Activated CD4-positive, alpha-beta memory T cell treated with anti-CD3 and anti-CD28 coated beads for 36 hours (primary cell): ENCODE measurements at regions of chr16 and their contacts with region 1.

Region 1: DNA sequence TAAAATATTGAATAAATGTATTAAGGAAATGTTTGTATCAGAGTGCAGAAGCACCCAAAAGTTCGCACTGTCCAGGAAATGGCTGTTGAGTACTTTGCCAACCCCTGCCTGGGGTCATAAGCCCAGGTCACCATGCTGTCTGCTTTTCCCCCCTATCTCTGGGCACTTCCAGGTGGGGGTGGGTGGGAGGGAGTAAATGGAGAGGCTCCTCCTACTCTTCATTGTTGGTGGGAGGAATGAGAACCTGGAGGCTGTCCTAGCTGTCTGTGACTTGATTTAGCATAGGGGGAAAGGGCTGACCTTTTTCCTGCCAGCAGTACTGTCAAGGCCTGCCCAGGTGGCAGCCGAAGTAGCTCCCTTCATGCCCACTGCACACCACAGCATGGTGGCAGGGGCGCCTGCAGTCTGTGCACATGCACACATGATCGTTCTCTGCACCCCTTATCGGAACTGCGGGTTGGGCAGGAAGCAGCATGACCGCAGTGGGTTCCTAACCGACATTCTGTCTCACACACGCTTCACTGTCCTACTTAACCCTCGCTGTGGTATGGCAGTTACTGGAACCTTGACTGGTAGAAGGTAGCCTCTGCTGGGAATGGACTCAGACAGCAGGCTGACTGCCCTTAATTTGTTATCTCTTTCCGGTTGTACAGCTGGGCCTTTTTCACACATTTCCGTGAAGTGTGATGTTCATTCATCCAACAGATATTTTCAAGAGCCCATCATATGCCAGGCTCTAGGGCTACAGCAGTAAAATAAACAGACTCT is 41.5 kb downstream of the LDHD start:
- DNase-seq: peak; percentile 93
- H3K4me3 Mint-ChIP-seq: peak overlapping the region; percentile 52
- H3K27ac Mint-ChIP-seq: peak overlapping the region; percentile 91
- H3K4me1 Mint-ChIP-seq: peaks cover 42% of the 10 kb centered on the region
- H3K27me3 Mint-ChIP-seq: no peaks in the 10 kb centered on the region

Region 2: GRCh38 chr16:74606521-74607310 is 468.4 kb before region 1 on chr16 and contains the start of gene GLG1:
- CTCF ChIA-PET with region 1: no interaction called
- POLR2A ChIA-PET with region 1: no interaction called
- intact Hi-C with region 1: no loop called
- DNase-seq: peak; percentile 93
- H3K4me3 Mint-ChIP-seq: peak within 1 kb of the TSS; percentile 83
- H3K27ac Mint-ChIP-seq: peak within 1 kb of the TSS; percentile 85
- H3K4me1 Mint-ChIP-seq: peaks cover 54% of the 10 kb centered on the region
- H3K27me3 Mint-ChIP-seq: no peaks in the 10 kb centered on the region
- total RNA-seq, gene GLG1: 58.1 to 63.8 TPM

Region 3: DNA sequence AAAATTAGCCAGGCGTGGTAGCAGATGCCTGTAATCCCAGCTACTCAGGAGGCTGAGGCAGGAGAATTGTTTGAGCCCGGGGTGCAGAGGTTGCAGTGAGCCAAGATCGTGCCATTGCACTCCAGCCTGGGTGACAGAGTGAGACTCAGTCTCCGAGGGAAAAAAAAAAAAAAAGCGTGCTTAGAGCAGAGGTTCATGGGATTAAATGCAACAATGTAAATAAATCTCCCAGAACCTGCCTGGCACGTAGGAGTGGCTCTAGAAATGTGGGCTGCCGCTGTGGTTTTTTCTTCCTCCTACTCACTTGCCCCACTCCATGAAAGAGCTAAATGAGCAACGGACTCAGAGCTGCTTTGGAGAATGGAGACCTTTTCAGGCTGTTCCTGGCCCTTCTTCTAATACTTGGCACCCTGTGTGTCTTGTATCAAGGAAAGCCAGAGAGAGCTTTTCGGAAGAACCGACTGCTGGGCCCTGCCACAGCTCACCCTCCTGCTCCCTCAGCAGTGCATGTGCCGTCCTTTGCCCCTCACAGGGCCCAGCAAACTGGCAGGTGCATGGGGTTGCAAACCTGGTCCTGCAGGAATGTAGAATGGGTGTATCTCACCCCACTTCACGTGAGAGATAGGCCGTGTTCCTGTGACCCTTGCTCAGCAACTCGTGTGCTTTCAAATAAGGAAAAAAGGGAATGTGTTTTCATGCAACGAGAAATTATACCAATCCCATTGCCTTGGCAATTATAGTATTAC is 10.5 kb before region 1 on chr16:
- CTCF ChIA-PET with region 1: interaction called, 4 read pairs
- POLR2A ChIA-PET with region 1: interaction called, 3 read pairs
- intact Hi-C with region 1: loop called (anchors 1 kb)
- DNase-seq: peak; percentile 62
- H3K4me3 Mint-ChIP-seq: peak overlapping the region; percentile 5
- H3K27ac Mint-ChIP-seq: no peak overlapping the region
- H3K4me1 Mint-ChIP-seq: peaks cover 25% of the 10 kb centered on the region
- H3K27me3 Mint-ChIP-seq: no peaks in the 10 kb centered on the region